Naive thymus-derived CD4-positive, alpha-beta T cell (primary cell): ENCODE measurements at regions of chr14 and their contacts with region 1.

Region 1: GRCh38 chr14:60980811-60981632 is at the starts of genes SLC38A6 and TRMT5:
- DNase-seq: peak; percentile 84 to 95 (median 93)
- ATAC-seq: peak; percentile 91
- H3K4me3 ChIP-seq: peak within 1 kb of the TSS; percentile 94
- H3K4me3 Mint-ChIP-seq: no peak within 1 kb of the TSS
- H3K27ac ChIP-seq: peak within 1 kb of the TSS; percentile 88
- H3K27ac Mint-ChIP-seq: no peak within 1 kb of the TSS
- H3K4me1 ChIP-seq: peaks cover 11 to 14% of the 10 kb centered on the region in 2 donors
- H3K4me1 Mint-ChIP-seq: peaks cover 12 to 39% (median 26%) of the 10 kb centered on the region in 7 donors
- H3K27me3 ChIP-seq: no peaks in the 10 kb centered on the region
- H3K27me3 Mint-ChIP-seq: no peaks in the 10 kb centered on the region
- total RNA-seq, gene SLC38A6: 8.9 to 21.9 (median 15.8) TPM
- total RNA-seq, gene TRMT5: 1.9 to 10.6 (median 6.5) TPM

Region 2: GRCh38 chr14:59964251-59965007 is 1016.6 kb before region 1 on chr14:
- CTCF ChIA-PET with region 1: no interaction called
- POLR2A ChIA-PET with region 1: no interaction called
- intact Hi-C with region 1: loop called in 1 of 2 experiments (anchors 5 kb)
- DNase-seq: peak in 6 of 9 donors; percentile 6 to 38 (median 20)
- ATAC-seq: peak; percentile 44
- H3K4me3 ChIP-seq: no peak overlapping the region
- H3K4me3 Mint-ChIP-seq: peak overlapping the region; percentile 77 to 95 (median 88)
- H3K27ac ChIP-seq: no peak overlapping the region
- H3K27ac Mint-ChIP-seq: peak overlapping the region in 8 of 9 donors; percentile 40 to 99 (median 88)
- H3K4me1 ChIP-seq: no peaks in the 10 kb centered on the region
- H3K4me1 Mint-ChIP-seq: peaks cover 3 to 14% (median 10%) of the 10 kb centered on the region in 7 donors
- H3K27me3 ChIP-seq: no peaks in the 10 kb centered on the region
- H3K27me3 Mint-ChIP-seq: peaks cover 0 to 15% (median 5%) of the 10 kb centered on the region in 5 donors

Region 3: GRCh38 chr14:60164712-60165546 is 816.1 kb before region 1 on chr14 and contains the start of gene DHRS7:
- CTCF ChIA-PET with region 1: no interaction called
- POLR2A ChIA-PET with region 1: no interaction called
- intact Hi-C with region 1: loop called in 1 of 2 experiments (anchors 5 kb)
- DNase-seq: peak; percentile 47 to 75 (median 60)
- ATAC-seq: peak; percentile 85
- H3K4me3 ChIP-seq: peak within 1 kb of the TSS; percentile 85
- H3K4me3 Mint-ChIP-seq: peak within 1 kb of the TSS; percentile 86 to 99 (median 95)
- H3K27ac ChIP-seq: peak within 1 kb of the TSS; percentile 90
- H3K27ac Mint-ChIP-seq: peak within 1 kb of the TSS; percentile 91 to 99 (median 97)
- H3K4me1 ChIP-seq: peaks cover 20 to 27% of the 10 kb centered on the region in 2 donors
- H3K4me1 Mint-ChIP-seq: peaks cover 22 to 53% (median 42%) of the 10 kb centered on the region in 7 donors
- H3K27me3 ChIP-seq: no peaks in the 10 kb centered on the region
- H3K27me3 Mint-ChIP-seq: no peaks in the 10 kb centered on the region
- total RNA-seq, gene DHRS7: 29.9 to 50.9 (median 38.0) TPM

Region 4: GRCh38 chr14:60656686-60657455 is 324.2 kb before region 1 on chr14:
- CTCF ChIA-PET with region 1: no interaction called
- POLR2A ChIA-PET with region 1: no interaction called
- intact Hi-C with region 1: loop called in 1 of 2 experiments (anchors 2 kb)
- DNase-seq: peak in 1 of 9 donors; percentile 54
- ATAC-seq: peak; percentile 49
- H3K4me3 ChIP-seq: peak overlapping the region; percentile 30
- H3K4me3 Mint-ChIP-seq: peak overlapping the region; percentile 66 to 84 (median 79)
- H3K27ac ChIP-seq: no peak overlapping the region
- H3K27ac Mint-ChIP-seq: no peak overlapping the region
- H3K4me1 ChIP-seq: peaks cover 12 to 17% of the 10 kb centered on the region in 2 donors
- H3K4me1 Mint-ChIP-seq: peaks cover 13 to 58% (median 50%) of the 10 kb centered on the region in 7 donors
- H3K27me3 ChIP-seq: peaks cover 14 to 38% of the 10 kb centered on the region in 2 donors
- H3K27me3 Mint-ChIP-seq: peaks cover 75 to 90% (median 82%) of the 10 kb centered on the region in 5 donors

Region 5: DNA sequence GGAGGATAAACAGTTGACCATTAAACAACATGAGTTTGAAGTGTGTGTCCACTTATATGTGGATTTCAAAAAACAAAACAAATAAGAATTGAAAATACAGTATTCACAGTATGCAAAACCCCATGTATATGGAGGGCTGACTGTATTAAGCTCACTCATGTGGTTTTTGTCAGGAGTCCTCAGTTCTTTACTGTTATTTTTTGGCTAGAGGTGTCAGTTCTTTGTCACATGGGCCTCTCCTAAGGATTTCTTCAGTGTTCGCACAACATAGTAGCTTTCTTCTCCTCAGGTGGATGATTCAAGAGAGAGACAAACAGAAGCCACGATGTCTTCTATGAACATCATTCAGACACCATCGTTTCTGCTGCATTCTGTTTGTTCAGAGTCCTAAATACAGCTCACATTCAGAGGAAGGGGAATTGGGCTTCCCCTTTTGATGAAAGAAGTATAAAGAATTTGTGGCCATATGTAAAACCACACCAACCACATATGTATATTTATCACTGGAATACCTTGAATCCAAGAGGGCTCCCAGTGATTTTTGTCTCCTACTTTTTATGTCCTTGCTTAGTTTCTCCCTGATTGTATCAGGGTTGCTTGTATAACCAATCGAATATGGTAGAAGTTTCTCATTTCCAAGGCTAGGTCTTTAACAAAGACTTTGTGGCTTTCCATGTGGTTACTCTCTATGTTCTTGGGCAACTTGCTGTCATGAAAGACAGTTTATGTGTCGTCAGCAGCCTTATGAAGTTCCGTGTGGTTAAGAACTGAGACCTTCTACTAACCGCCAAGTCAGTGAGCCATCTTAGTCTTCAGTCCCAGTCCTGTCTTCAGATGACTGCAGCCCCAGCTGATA is 227.5 kb before region 1 on chr14:
- CTCF ChIA-PET with region 1: no interaction called
- POLR2A ChIA-PET with region 1: no interaction called
- intact Hi-C with region 1: loop called in 1 of 2 experiments (anchors 1 kb)
- DNase-seq: peak in 8 of 9 donors; percentile 54 to 86 (median 81)
- ATAC-seq: peak; percentile 96
- H3K4me3 ChIP-seq: no peak overlapping the region
- H3K4me3 Mint-ChIP-seq: peak overlapping the region in 9 of 10 donors; percentile 48 to 85 (median 61)
- H3K27ac ChIP-seq: no peak overlapping the region
- H3K27ac Mint-ChIP-seq: peak overlapping the region; percentile 29 to 93 (median 81)
- H3K4me1 ChIP-seq: peaks cover 19 to 20% of the 10 kb centered on the region in 2 donors
- H3K4me1 Mint-ChIP-seq: peaks cover 21 to 64% (median 42%) of the 10 kb centered on the region in 7 donors
- H3K27me3 ChIP-seq: no peaks in the 10 kb centered on the region
- H3K27me3 Mint-ChIP-seq: peaks cover 0 to 7% (median 0%) of the 10 kb centered on the region in 5 donors

Region 6: DNA sequence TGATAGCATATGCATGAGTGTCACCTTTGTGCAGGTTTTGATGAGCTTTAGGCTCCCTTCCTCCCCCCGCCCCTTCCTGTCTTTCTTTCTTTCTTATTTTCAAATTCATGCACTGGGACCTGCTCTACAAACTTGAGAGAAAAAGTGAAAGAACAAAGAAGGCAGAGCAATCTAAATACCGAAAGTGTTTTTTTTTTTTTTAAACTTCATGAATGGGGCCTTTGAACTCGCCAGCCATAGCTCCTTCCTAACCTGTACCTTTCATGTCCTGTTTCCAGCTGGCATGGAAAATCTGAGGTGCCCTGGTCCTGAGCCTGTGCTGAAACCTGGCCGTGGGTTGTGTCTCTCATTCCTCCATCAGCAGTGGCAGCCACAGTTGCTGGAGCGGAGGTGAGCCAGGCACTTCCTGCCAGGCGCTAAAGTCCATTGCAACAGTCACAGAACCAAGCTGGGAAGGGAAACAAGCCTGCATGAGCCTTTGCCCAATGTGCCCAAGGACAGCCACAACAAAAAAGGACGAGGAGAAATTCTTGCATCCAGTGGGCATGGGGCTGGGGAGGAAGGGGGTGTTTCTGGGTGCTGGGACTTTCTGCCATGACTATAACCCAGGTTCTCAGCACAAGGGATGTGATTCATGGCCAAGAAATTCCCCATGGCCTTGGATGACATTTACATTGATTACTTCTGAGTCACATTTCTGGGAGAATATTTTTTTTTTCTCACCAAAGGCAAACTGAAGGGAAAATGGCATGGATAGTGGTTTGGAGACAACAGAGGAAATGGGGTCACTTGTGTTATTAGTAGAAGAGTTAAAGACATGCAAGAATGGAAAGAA is 197.4 kb after region 1 on chr14:
- CTCF ChIA-PET with region 1: no interaction called
- POLR2A ChIA-PET with region 1: no interaction called
- intact Hi-C with region 1: loop called in 1 of 2 experiments (anchors 2 kb)
- DNase-seq: peak in 4 of 9 donors; percentile 4 to 43 (median 24)
- ATAC-seq: peak; percentile 42
- H3K4me3 ChIP-seq: peak overlapping the region; percentile 22
- H3K4me3 Mint-ChIP-seq: peak overlapping the region; percentile 63 to 83 (median 75)
- H3K27ac ChIP-seq: no peak overlapping the region
- H3K27ac Mint-ChIP-seq: peak overlapping the region in 8 of 9 donors; percentile 19 to 93 (median 65)
- H3K4me1 ChIP-seq: peaks cover 0 to 8% of the 10 kb centered on the region in 2 donors
- H3K4me1 Mint-ChIP-seq: peaks cover 10 to 37% (median 17%) of the 10 kb centered on the region in 7 donors
- H3K27me3 ChIP-seq: no peaks in the 10 kb centered on the region
- H3K27me3 Mint-ChIP-seq: peaks cover 0 to 12% (median 4%) of the 10 kb centered on the region in 5 donors

Region 7: DNA sequence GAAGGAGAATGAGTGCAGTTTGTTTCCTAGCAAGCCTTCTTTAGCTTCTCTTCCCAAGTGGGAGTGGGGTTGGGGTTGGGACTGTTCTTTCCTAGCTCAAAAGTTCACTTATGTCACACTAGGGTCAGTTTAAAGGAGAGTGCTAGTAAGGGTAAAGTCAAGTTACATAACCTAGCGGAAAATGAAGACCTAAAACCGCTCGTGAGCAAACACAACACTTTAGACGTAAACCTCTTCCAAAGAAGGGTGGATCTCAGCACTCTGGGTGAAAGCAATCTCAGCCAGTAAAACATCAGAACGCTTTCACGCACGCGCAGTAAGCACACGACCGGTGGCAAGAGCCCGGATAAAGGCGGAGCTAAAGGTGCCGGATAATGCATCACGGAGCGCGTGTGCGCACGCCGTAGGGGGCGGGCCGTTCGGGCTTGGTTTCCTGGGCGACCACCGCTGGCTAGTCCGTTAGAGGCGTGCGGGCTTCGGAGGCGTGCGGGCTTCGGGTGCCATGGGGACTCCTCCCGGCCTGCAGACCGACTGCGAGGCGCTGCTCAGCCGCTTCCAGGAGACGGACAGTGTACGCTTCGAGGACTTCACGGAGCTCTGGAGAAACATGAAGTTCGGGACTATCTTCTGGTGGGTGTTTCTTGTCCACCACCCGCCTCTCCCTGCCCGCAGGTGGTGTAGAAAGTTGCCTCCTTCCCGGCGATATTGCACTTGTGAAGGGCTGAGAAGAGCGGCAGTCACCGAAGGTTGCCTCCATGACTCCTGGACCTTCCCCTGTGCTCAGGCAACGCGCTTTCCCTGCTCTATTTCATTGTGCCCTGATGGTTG is 781.2 kb after region 1 on chr14 and contains the start of gene SNAPC1:
- CTCF ChIA-PET with region 1: no interaction called
- POLR2A ChIA-PET with region 1: interaction called, 5 read pairs
- intact Hi-C with region 1: loop called (anchors 1 to 10 kb)
- DNase-seq: peak; percentile 92 to 98 (median 96)
- ATAC-seq: peak; percentile 97
- H3K4me3 ChIP-seq: peak within 1 kb of the TSS; percentile 94
- H3K4me3 Mint-ChIP-seq: peak within 1 kb of the TSS; percentile 96 to 100 (median 98)
- H3K27ac ChIP-seq: peak within 1 kb of the TSS; percentile 95
- H3K27ac Mint-ChIP-seq: peak within 1 kb of the TSS; percentile 98 to 100 (median 99)
- H3K4me1 ChIP-seq: peaks cover 13 to 17% of the 10 kb centered on the region in 2 donors
- H3K4me1 Mint-ChIP-seq: peaks cover 27 to 62% (median 53%) of the 10 kb centered on the region in 7 donors
- H3K27me3 ChIP-seq: no peaks in the 10 kb centered on the region
- H3K27me3 Mint-ChIP-seq: peaks cover 0 to 4% (median 0%) of the 10 kb centered on the region in 5 donors
- total RNA-seq, gene SNAPC1: 3.5 to 8.7 (median 5.1) TPM